Heart right ventricle (tissue), 16 donors: ENCODE measurements at regions of chr7 and their contacts with region 1.

Region 1: GRCh38 chr7:100568896-100569844 is 4.5 kb downstream of the SAP25 start:
- DNase-seq: peak in 1 of 2 donors; percentile 40
- ATAC-seq: peak; percentile 12 to 48 (median 30)
- H3K4me3 ChIP-seq: peak overlapping the region in 9 of 10 donors; percentile 22 to 54 (median 43)
- H3K27ac ChIP-seq: peak overlapping the region in 2 of 10 donors; percentile 5 to 38
- H3K4me1 ChIP-seq: peaks cover 0 to 27% (median 15%) of the 10 kb centered on the region in 9 donors
- H3K27me3 ChIP-seq: peaks cover 0 to 18% (median 0%) of the 10 kb centered on the region in 7 donors
- CTCF ChIP-seq: peak in 7 of 9 donors; percentile 21 to 44 (median 32)

Region 2: GRCh38 chr7:100680167-100680575 is 111.0 kb after region 1 on chr7:
- intact Hi-C with region 1: loop called in 1 of 10 experiments (anchors 2 kb)
- DNase-seq: peak in 1 of 2 donors; percentile 48
- ATAC-seq: peak in 6 of 8 donors; percentile 7 to 41 (median 21)
- H3K4me3 ChIP-seq: no peak overlapping the region
- H3K27ac ChIP-seq: peak overlapping the region in 5 of 10 donors; percentile 4 to 55 (median 21)
- H3K4me1 ChIP-seq: peaks cover 0 to 49% (median 23%) of the 10 kb centered on the region in 9 donors
- H3K27me3 ChIP-seq: no peaks in the 10 kb centered on the region
- CTCF ChIP-seq: no peak